Stomach (tissue), 19 donors: ENCODE measurements at regions of chr12 and their contacts with region 1.

Region 1: DNA sequence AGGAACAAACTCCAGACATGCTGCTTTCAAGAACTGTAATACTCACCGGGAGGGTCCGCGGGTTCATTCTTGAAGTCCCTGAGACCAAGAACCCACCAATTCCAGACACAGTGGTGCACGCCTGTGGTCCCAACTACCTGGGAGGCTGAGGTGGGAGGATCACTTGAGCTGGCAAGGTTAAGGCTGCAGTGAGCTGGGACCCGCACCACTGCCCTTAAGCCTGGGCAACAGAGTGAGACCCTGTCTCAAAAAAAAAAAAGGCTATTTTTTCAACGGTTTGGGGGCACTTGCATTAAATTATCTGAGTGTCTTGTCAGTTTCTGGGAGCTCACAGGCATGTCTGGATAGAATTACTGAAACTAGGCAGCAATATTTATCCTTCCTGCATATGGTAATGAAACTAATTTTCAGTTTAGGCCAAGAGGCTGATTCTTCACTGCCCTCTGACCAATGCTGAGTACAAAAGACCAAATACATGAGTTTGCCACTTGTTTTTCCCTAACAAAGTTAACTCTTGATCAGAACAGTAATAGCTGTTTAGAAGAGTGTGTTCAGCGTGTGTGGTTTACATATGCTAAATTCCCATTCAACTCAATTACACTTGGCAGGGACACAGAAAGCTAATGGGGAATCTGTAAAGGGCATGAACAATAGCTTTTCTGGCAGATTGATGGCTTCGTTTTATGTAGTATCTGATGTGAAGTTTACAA is 65.8 kb upstream of the RASSF3 start:
- DNase-seq: peak in 1 of 2 donors; percentile 25
- H3K4me3 ChIP-seq: no peak overlapping the region
- H3K27ac ChIP-seq: no peak overlapping the region
- H3K4me1 ChIP-seq: peaks cover 0 to 2% (median under 1%) of the 10 kb centered on the region in 4 donors
- H3K27me3 ChIP-seq: peaks cover 0 to 6% (median 0%) of the 10 kb centered on the region in 3 donors
- CTCF ChIP-seq: no peak
- EP300 ChIP-seq: no peak
- POLR2A ChIP-seq: no peak

Region 2: GRCh38 chr12:64433915-64434314 is 110.6 kb before region 1 on chr12:
- intact Hi-C with region 1: no loop called
- DNase-seq: no peak
- H3K4me3 ChIP-seq: no peak overlapping the region
- H3K27ac ChIP-seq: no peak overlapping the region
- H3K4me1 ChIP-seq: peaks cover 0 to 5% (median 0%) of the 10 kb centered on the region in 4 donors
- H3K27me3 ChIP-seq: no peaks in the 10 kb centered on the region
- CTCF ChIP-seq: no peak
- EP300 ChIP-seq: no peak
- POLR2A ChIP-seq: no peak

Region 3: DNA sequence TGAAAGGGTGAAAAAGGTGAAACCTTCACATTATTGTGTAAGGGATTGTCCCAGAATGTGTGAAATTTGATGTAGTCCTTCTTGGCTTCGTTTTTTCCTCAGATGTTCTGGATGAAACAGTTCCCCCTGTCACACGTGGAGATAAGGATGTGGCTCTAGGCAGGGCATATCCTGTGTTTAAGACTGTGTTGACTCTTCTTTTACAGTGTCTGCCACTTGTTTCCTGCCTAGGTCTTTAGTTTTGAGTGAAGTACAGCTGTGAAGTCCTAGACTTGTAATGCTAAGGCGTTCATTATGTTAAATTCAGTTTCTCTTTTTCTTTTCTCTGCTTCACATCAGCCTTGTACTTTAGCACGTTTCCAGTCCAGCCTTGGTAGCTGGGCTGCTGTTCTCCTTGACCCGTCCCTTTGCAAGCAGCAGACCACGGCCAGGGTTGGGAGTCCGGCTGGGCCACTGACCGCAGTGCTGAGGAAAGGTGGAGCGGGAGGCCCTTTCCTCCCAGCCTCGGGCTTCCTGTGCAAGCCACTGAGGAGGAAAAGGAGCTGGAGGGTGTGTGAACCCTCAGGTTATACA is 124.8 kb after region 1 on chr12:
- intact Hi-C with region 1: no loop called
- DNase-seq: peak; percentile 66 to 73
- H3K4me3 ChIP-seq: peak overlapping the region in 3 of 4 donors; percentile 18 to 27 (median 27)
- H3K27ac ChIP-seq: peak overlapping the region; percentile 53 to 91 (median 86)
- H3K4me1 ChIP-seq: peaks cover 96 to 100% (median 99%) of the 10 kb centered on the region in 4 donors
- H3K27me3 ChIP-seq: no peaks in the 10 kb centered on the region
- CTCF ChIP-seq: no peak
- EP300 ChIP-seq: no peak
- POLR2A ChIP-seq: no peak

Region 4: GRCh38 chr12:64699504-64700115 is 155.1 kb after region 1 on chr12:
- intact Hi-C with region 1: loop called (anchors 5 kb)
- DNase-seq: peak in 1 of 2 donors; percentile 29
- H3K4me3 ChIP-seq: no peak overlapping the region
- H3K27ac ChIP-seq: peak overlapping the region in 2 of 5 donors; percentile 56 to 67
- H3K4me1 ChIP-seq: peaks cover 0 to 57% (median 21%) of the 10 kb centered on the region in 4 donors
- H3K27me3 ChIP-seq: no peaks in the 10 kb centered on the region
- CTCF ChIP-seq: no peak
- EP300 ChIP-seq: no peak
- POLR2A ChIP-seq: no peak